ENCODE measurements at regions of chr10 and their contacts with region 1.

Region 1: DNA sequence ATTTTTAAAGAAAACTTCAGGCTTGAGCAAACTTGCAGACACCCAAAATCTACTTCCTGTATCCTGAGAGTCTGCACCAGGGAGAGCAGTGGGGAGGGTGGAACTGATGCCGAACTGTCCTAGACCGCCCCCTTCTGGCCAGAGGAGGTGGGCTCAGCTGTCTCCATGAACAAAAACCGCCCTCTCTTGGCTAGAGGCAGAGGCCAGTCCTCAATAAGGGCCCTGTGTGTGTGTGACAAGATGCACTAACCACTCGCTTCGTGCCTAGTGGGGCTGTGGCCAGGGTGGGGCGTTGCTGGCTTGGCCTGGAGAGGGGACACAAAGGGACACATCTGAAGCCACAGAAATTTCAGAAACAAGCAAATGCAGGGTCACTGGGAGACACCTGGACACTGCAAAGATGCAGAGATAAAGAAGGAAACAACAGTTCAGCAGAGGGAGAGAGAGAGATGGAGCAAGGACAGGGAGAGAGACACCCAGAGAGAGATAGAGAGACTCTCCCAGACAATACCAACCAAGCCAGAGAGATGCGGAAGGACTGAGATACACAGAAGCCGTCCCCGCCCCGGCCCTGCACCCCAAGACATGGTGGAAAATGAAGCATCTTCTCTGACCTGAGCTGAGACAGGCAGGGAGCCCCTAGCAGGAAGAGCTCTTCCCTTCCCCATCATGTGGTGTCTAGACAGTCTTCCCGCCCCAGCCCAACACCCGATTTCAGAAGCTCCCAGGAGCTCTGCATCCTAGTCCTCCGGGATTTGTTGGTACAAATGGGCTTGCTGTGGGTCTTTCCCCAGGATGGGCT is 22.7 kb upstream of the FXYD4 start:
- DNase-seq: peak; percentile 72 to 86 (median 83)
- ATAC-seq: peak; percentile 100
- H3K4me3 ChIP-seq: no peak overlapping the region
- H3K4me3 Mint-ChIP-seq: peak overlapping the region in 1 of 10 donors; percentile 6
- H3K27ac ChIP-seq: no peak overlapping the region
- H3K27ac Mint-ChIP-seq: peak overlapping the region in 5 of 9 donors; percentile 4 to 53 (median 36)
- H3K4me1 ChIP-seq: peaks cover 9% of the 10 kb centered on the region in 2 donors
- H3K4me1 Mint-ChIP-seq: peaks cover 9 to 42% (median 13%) of the 10 kb centered on the region in 7 donors
- H3K27me3 ChIP-seq: no peaks in the 10 kb centered on the region
- H3K27me3 Mint-ChIP-seq: peaks cover 0 to 22% (median 6%) of the 10 kb centered on the region in 5 donors

Region 2: GRCh38 chr10:43221419-43222209 is 127.1 kb before region 1 on chr10:
- CTCF ChIA-PET with region 1: no interaction called
- POLR2A ChIA-PET with region 1: no interaction called
- intact Hi-C with region 1: loop called in 1 of 2 experiments (anchors 1 kb)
- DNase-seq: no peak
- ATAC-seq: no peak
- H3K4me3 ChIP-seq: no peak overlapping the region
- H3K4me3 Mint-ChIP-seq: no peak overlapping the region
- H3K27ac ChIP-seq: no peak overlapping the region
- H3K27ac Mint-ChIP-seq: no peak overlapping the region
- H3K4me1 ChIP-seq: peaks cover 0 to 20% of the 10 kb centered on the region in 2 donors
- H3K4me1 Mint-ChIP-seq: peaks cover 0 to 9% (median 1%) of the 10 kb centered on the region in 7 donors
- H3K27me3 ChIP-seq: no peaks in the 10 kb centered on the region
- H3K27me3 Mint-ChIP-seq: peaks cover 0 to 26% (median 3%) of the 10 kb centered on the region in 5 donors

Region 3: GRCh38 chr10:43287056-43288007 is 61.4 kb before region 1 on chr10:
- CTCF ChIA-PET with region 1: interaction called, 76 read pairs
- POLR2A ChIA-PET with region 1: interaction called, 18 read pairs
- intact Hi-C with region 1: no loop called
- DNase-seq: peak in 3 of 9 donors; percentile 26 to 66 (median 37)
- ATAC-seq: peak; percentile 79
- H3K4me3 ChIP-seq: peak overlapping the region; percentile 21
- H3K4me3 Mint-ChIP-seq: peak overlapping the region; percentile 2 to 75 (median 64)
- H3K27ac ChIP-seq: no peak overlapping the region
- H3K27ac Mint-ChIP-seq: peak overlapping the region; percentile 62 to 94 (median 84)
- H3K4me1 ChIP-seq: peaks cover 16 to 25% of the 10 kb centered on the region in 2 donors
- H3K4me1 Mint-ChIP-seq: peaks cover 19 to 61% (median 26%) of the 10 kb centered on the region in 7 donors
- H3K27me3 ChIP-seq: no peaks in the 10 kb centered on the region
- H3K27me3 Mint-ChIP-seq: peaks cover 0 to 25% (median 4%) of the 10 kb centered on the region in 5 donors

Region 4: DNA sequence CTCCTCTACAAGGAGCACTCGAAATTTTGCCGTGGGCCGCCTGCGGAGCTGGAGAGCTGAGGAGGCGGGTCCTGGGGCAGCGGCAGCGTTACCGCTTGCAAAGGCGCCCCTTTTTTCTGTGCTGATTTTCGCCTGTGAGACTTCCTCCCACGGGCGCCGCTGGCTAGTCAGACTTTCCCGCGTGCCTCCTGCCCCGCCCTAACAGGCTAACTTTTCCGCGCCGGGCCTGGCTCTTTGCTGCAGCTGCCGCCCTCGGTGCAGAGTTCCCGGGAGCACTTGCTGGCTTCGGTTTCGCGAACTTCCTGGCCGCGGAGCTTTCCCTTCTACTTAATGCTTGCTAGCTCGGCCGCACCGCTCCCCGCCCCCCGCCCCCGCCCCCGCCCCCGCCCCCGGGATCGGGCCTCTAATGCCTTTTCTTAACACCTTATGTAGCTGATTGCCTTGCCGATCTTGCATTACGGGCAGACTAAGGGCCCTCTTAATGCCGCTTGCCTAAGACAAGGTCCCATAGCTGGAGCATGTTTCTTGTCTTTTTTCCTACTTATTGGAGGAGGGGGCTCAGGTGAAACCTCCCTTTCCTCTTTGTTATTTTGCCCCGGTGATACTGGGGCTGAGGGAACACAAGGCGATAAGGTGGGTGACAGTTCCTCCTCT is 43.9 kb before region 1 on chr10:
- CTCF ChIA-PET with region 1: interaction called, 7 read pairs
- POLR2A ChIA-PET with region 1: interaction called, 4 read pairs
- intact Hi-C with region 1: loop called in 1 of 2 experiments (anchors 1 kb)
- DNase-seq: peak in 7 of 9 donors; percentile 23 to 60 (median 32)
- ATAC-seq: peak; percentile 71
- H3K4me3 ChIP-seq: peak overlapping the region; percentile 30
- H3K4me3 Mint-ChIP-seq: peak overlapping the region; percentile 76 to 87 (median 82)
- H3K27ac ChIP-seq: no peak overlapping the region
- H3K27ac Mint-ChIP-seq: peak overlapping the region in 2 of 9 donors; percentile 76 to 80
- H3K4me1 ChIP-seq: peaks cover 21 to 23% of the 10 kb centered on the region in 2 donors
- H3K4me1 Mint-ChIP-seq: peaks cover 23 to 55% (median 47%) of the 10 kb centered on the region in 7 donors
- H3K27me3 ChIP-seq: no peaks in the 10 kb centered on the region
- H3K27me3 Mint-ChIP-seq: peaks cover 0 to 38% (median 6%) of the 10 kb centered on the region in 5 donors

Region 5: GRCh38 chr10:43461950-43462349 is 113.2 kb after region 1 on chr10:
- CTCF ChIA-PET with region 1: interaction called, 3 read pairs
- POLR2A ChIA-PET with region 1: no interaction called
- intact Hi-C with region 1: loop called (anchors 1 kb)
- DNase-seq: peak in 7 of 9 donors; percentile 62 to 79 (median 70)
- ATAC-seq: peak; percentile 92
- H3K4me3 ChIP-seq: no peak overlapping the region
- H3K4me3 Mint-ChIP-seq: peak overlapping the region in 1 of 10 donors; percentile 20
- H3K27ac ChIP-seq: no peak overlapping the region
- H3K27ac Mint-ChIP-seq: peak overlapping the region in 6 of 9 donors; percentile 2 to 67 (median 40)
- H3K4me1 ChIP-seq: peaks cover 1 to 7% of the 10 kb centered on the region in 2 donors
- H3K4me1 Mint-ChIP-seq: peaks cover 4 to 22% (median 19%) of the 10 kb centered on the region in 7 donors
- H3K27me3 ChIP-seq: no peaks in the 10 kb centered on the region
- H3K27me3 Mint-ChIP-seq: no peaks in the 10 kb centered on the region

Measured in naive thymus-derived CD4-positive, alpha-beta T cell (primary cell).